Activated CD8-positive, alpha-beta T cell treated with anti-CD3 and anti-CD28 coated beads, Interleukin-2, amount 10 ng/mL, durations not matched to agents 7 days and 5 days (primary cell): ENCODE measurements at regions of chr14 and their contacts with region 1.

Region 1: GRCh38 chr14:103920981-103921854 is 7.0 kb upstream of the TDRD9 start:
- DNase-seq: peak; percentile 94
- ATAC-seq: peak; percentile 99
- H3K4me3 Mint-ChIP-seq: peak overlapping the region; percentile 91
- H3K27ac Mint-ChIP-seq: peak overlapping the region; percentile 86
- H3K4me1 Mint-ChIP-seq: peaks cover 8% of the 10 kb centered on the region
- H3K27me3 Mint-ChIP-seq: peaks cover 12% of the 10 kb centered on the region

Region 2: DNA sequence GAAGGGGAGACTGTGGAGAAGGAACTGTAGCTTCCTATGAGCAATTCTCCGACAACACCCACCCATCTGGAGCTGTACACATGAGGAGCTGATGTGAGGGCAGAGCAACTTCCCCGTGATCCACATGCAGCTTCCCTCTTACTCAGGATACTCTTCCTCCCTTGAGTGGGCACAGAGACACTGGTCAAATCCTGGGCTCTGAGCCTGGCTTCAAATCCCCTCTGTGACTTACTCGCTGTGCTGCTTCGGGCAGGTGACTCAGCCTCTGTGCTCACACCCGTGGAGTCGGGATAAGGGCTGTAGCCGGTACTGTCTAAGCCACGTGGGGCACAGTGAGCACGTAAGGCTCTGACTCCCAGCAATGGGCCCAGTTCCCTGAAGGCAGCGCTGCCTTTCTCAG is 174.5 kb before region 1 on chr14:
- CTCF ChIA-PET with region 1: no interaction called
- POLR2A ChIA-PET with region 1: no interaction called
- DNase-seq: no peak
- ATAC-seq: no peak
- H3K4me3 Mint-ChIP-seq: no peak overlapping the region
- H3K27ac Mint-ChIP-seq: no peak overlapping the region
- H3K4me1 Mint-ChIP-seq: peaks cover 25% of the 10 kb centered on the region
- H3K27me3 Mint-ChIP-seq: no peaks in the 10 kb centered on the region

Region 3: GRCh38 chr14:103910262-103910935 is 10.8 kb before region 1 on chr14:
- CTCF ChIA-PET with region 1: interaction called, 52 read pairs
- POLR2A ChIA-PET with region 1: no interaction called
- DNase-seq: peak; percentile 80
- ATAC-seq: peak; percentile 95
- H3K4me3 Mint-ChIP-seq: peak overlapping the region; percentile 32
- H3K27ac Mint-ChIP-seq: peak overlapping the region; percentile 62
- H3K4me1 Mint-ChIP-seq: peaks cover 27% of the 10 kb centered on the region
- H3K27me3 Mint-ChIP-seq: no peaks in the 10 kb centered on the region

Region 4: DNA sequence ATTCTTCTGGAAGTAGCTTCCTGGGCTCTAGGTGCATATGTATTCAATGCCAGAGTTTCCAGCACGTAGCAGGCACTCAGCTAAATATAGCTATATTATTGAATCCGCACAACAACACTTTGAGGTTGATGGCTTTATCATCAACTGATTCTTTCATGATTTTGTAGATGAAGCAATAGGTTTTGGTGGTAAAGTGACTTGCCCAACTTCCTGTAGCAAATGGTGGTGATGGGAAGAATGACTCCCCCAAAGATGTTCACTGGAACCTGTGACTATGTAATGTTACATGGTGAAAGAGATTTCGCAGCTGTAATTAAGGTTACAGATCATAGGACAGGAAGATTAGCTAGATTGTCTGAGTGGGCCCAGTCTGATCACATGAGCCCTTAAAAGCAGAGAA is 10.2 kb after region 1 on chr14:
- CTCF ChIA-PET with region 1: interaction called, 12 read pairs
- POLR2A ChIA-PET with region 1: no interaction called
- DNase-seq: no peak
- ATAC-seq: peak; percentile 27
- H3K4me3 Mint-ChIP-seq: no peak overlapping the region
- H3K27ac Mint-ChIP-seq: no peak overlapping the region
- H3K4me1 Mint-ChIP-seq: peaks cover 22% of the 10 kb centered on the region
- H3K27me3 Mint-ChIP-seq: peaks cover 2% of the 10 kb centered on the region